T-cell (primary cell): ENCODE measurements at regions of chr7 and their contacts with region 1.

Region 1: DNA sequence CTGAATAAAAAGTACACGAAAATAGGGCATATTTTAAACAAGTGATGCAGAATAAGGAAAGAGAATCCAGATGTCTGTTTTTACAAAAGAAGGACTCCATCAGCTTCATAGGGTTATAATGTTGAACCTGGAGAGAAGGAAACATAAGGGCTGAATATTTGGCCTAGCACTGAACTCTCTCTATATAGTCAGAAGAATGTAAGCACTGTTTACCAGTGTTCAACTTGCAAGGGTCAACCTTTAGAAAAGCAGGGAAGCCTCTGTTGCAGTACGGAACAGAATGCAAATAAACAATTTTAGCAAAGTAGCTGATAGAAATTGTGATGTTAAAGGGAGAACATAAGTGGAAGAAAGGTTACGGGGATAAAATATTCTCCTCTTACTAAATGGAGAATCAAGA is 16.2 kb downstream of the CDK6 start:
- DNase-seq: no peak
- ATAC-seq: no peak
- H3K4me3 ChIP-seq: no peak overlapping the region
- H3K4me3 Mint-ChIP-seq: peak overlapping the region in 1 of 3 donors; percentile 26
- H3K27ac ChIP-seq: no peak overlapping the region
- H3K27ac Mint-ChIP-seq: no peak overlapping the region
- H3K4me1 ChIP-seq: peaks cover 3 to 4% of the 10 kb centered on the region in 2 experiments
- H3K4me1 Mint-ChIP-seq: peaks cover 41 to 69% (median 65%) of the 10 kb centered on the region in 3 donors
- H3K27me3 ChIP-seq: no peaks in the 10 kb centered on the region
- H3K27me3 Mint-ChIP-seq: no peaks in the 10 kb centered on the region

Region 2: GRCh38 chr7:92584996-92585395 is 235.2 kb before region 1 on chr7:
- CTCF ChIA-PET with region 1: no interaction called
- POLR2A ChIA-PET with region 1: interaction called in 1 of 2 experiments, 11 read pairs
- DNase-seq: peak in 3 of 35 experiments; percentile 6 to 33 (median 11)
- ATAC-seq: peak in 1 of 4 experiments; percentile 21
- H3K4me3 ChIP-seq: no peak overlapping the region
- H3K4me3 Mint-ChIP-seq: peak overlapping the region in 1 of 3 donors; percentile 22
- H3K27ac ChIP-seq: peak overlapping the region; percentile 1
- H3K27ac Mint-ChIP-seq: peak overlapping the region; percentile 25 to 79
- H3K4me1 ChIP-seq: peaks cover 19 to 20% of the 10 kb centered on the region in 2 experiments
- H3K4me1 Mint-ChIP-seq: peaks cover 65 to 74% (median 66%) of the 10 kb centered on the region in 3 donors
- H3K27me3 ChIP-seq: no peaks in the 10 kb centered on the region
- H3K27me3 Mint-ChIP-seq: no peaks in the 10 kb centered on the region

Region 3: DNA sequence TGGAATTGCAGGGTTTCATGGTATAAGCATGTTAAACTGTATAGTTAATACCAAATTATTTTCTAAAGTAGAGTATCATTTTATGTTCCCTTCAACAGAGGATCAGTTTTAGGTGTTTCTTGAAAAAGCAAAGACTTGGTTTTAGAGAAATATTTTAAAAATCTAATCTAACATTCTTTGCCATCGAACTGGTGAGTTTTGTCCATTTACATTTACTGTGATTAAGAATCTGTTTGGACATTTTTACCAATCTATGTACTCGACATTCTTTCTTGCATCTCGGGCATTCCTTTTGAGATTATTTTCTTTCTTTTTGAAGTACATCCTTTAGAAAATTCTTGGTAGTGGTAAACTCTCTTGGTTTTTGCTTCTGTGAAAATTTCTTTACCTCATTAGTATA is 115.3 kb before region 1 on chr7:
- CTCF ChIA-PET with region 1: interaction called in 1 of 2 experiments, 15 read pairs
- POLR2A ChIA-PET with region 1: no interaction called
- DNase-seq: no peak
- ATAC-seq: no peak
- H3K4me3 ChIP-seq: no peak overlapping the region
- H3K4me3 Mint-ChIP-seq: no peak overlapping the region
- H3K27ac ChIP-seq: no peak overlapping the region
- H3K27ac Mint-ChIP-seq: no peak overlapping the region
- H3K4me1 ChIP-seq: no peaks in the 10 kb centered on the region
- H3K4me1 Mint-ChIP-seq: peaks cover 3 to 30% (median 30%) of the 10 kb centered on the region in 3 donors
- H3K27me3 ChIP-seq: no peaks in the 10 kb centered on the region
- H3K27me3 Mint-ChIP-seq: no peaks in the 10 kb centered on the region

Region 4: GRCh38 chr7:92716825-92717580 is 103.2 kb before region 1 on chr7:
- CTCF ChIA-PET with region 1: no interaction called
- POLR2A ChIA-PET with region 1: no interaction called
- DNase-seq: no peak
- ATAC-seq: no peak
- H3K4me3 ChIP-seq: no peak overlapping the region
- H3K4me3 Mint-ChIP-seq: peak overlapping the region in 2 of 3 donors; percentile 71 to 87
- H3K27ac ChIP-seq: no peak overlapping the region
- H3K27ac Mint-ChIP-seq: peak overlapping the region in 1 of 2 donors; percentile 34
- H3K4me1 ChIP-seq: peaks cover 9 to 16% of the 10 kb centered on the region in 2 experiments
- H3K4me1 Mint-ChIP-seq: peaks cover 26 to 46% (median 44%) of the 10 kb centered on the region in 3 donors
- H3K27me3 ChIP-seq: no peaks in the 10 kb centered on the region
- H3K27me3 Mint-ChIP-seq: no peaks in the 10 kb centered on the region